SK-N-SH (cell line): ENCODE measurements at regions of chr17 and their contacts with region 1.

Region 1: DNA sequence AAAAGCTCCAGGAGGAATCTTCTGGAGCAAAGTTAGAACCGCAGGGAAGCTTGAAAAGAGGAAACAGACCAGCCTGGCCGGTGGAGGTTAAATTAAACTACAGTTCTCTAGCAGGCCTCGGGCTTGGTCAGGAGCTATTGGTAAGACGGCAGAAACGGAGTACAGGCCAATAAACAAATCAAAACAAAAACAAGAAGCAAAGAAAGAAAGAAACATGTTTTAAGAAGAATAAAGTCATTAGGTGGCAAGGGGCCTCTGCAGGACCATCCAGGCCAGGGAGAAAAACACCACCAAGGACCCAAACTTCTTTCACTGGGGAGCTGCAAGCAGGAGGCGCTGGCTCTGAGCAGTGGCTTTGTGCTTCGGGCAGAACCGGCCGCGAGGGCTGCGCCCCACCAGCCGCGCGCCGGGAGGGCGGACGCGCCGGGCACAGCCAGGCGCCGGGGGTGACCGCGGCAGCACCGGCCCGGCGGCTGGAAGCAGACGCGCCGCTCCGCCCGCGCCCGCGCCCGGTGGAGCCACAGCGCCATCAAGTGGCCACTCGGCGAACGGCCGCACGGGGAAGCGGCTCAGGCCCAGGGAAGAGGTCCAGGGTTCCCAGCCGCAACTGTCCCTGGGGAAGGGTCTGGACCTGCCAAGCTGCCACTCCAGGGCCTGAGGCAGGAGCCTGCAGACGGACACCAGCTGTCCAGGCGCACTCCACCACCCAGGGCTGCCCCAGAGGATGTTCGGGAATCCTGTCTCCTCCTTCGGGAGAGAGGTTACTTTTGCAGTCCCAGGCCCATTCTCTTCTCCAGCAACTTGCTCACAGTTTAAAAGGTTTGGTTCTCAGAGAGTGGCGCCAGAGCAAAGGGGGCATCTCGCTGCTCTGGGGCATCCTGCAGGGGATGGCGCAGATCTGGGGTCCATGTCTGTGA is 419.4 kb downstream of the SOX9 start:
- DNase-seq: peak; percentile 99
- H3K4me3 ChIP-seq: no peak overlapping the region
- H3K27ac ChIP-seq: peak overlapping the region; percentile 31 to 54
- H3K4me1 ChIP-seq: peaks cover 9 to 14% of the 10 kb centered on the region in 2 experiments
- H3K27me3 ChIP-seq: no peaks in the 10 kb centered on the region
- CTCF ChIP-seq: peak; percentile 82
- EP300 ChIP-seq: peak; percentile 14 to 16; a peak in 1 of 4 replicates
- RAD21 ChIP-seq: peak; percentile 93

Region 2: GRCh38 chr17:71084219-71084618 is 1456.0 kb before region 1 on chr17:
- CTCF ChIA-PET with region 1: interaction called, 16 read pairs
- POLR2A ChIA-PET with region 1: no interaction called
- DNase-seq: peak; percentile 28
- H3K4me3 ChIP-seq: no peak overlapping the region; a peak in 1 of 4 replicates
- H3K27ac ChIP-seq: no peak overlapping the region
- H3K4me1 ChIP-seq: no peaks in the 10 kb centered on the region
- H3K27me3 ChIP-seq: no peaks in the 10 kb centered on the region
- CTCF ChIP-seq: peak; percentile 67
- EP300 ChIP-seq: no peak
- RAD21 ChIP-seq: peak; percentile 79

Region 3: DNA sequence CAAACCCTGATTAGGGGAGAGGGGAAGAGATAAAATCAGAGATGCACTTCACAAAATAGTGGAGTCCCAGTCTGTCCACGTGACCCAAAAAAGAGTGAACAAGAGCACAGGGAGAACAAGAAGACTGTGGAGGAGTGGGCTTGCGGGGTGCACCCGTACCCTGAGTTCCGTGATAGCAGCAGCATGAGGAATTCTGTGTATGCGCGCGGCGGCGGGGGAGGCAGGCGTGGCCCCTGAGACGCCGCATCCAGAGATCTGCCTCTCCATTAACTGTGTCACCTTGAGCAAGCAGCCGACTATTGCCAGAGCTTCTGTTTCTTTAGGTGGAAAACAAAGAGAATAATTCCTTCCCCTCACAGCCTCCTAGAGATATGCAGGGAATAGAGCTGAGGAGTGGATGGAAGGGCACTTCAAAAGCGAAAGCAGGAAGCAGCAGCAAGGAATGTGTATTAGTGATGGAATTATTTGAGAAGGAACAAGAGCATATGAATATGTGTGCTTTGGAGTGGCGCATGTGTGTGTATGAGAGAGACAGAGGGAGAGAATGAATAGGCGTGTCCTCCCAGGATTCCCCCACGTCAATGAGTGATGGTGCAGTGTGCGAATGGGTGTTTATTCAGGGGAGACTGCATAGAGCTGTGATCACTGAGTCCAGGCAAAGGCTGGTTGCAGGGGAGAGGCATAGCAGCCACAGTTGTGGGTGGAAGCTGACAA is 429.9 kb before region 1 on chr17:
- CTCF ChIA-PET with region 1: interaction called, 69 read pairs
- POLR2A ChIA-PET with region 1: no interaction called
- DNase-seq: no peak
- H3K4me3 ChIP-seq: no peak overlapping the region
- H3K27ac ChIP-seq: no peak overlapping the region
- H3K4me1 ChIP-seq: peaks cover 0 to 20% of the 10 kb centered on the region in 2 experiments; a peak in 1 of 4 replicates
- H3K27me3 ChIP-seq: no peaks in the 10 kb centered on the region
- CTCF ChIP-seq: no peak
- EP300 ChIP-seq: no peak
- RAD21 ChIP-seq: no peak

Region 4: GRCh38 chr17:72381597-72382397 is 158.4 kb before region 1 on chr17:
- CTCF ChIA-PET with region 1: interaction called, 25 read pairs
- POLR2A ChIA-PET with region 1: interaction called, 6 read pairs
- DNase-seq: peak; percentile 54
- H3K4me3 ChIP-seq: no peak overlapping the region
- H3K27ac ChIP-seq: no peak overlapping the region
- H3K4me1 ChIP-seq: peaks cover 18 to 52% of the 10 kb centered on the region in 2 experiments
- H3K27me3 ChIP-seq: no peaks in the 10 kb centered on the region
- CTCF ChIP-seq: no peak
- EP300 ChIP-seq: no peak
- RAD21 ChIP-seq: no peak

Region 5: DNA sequence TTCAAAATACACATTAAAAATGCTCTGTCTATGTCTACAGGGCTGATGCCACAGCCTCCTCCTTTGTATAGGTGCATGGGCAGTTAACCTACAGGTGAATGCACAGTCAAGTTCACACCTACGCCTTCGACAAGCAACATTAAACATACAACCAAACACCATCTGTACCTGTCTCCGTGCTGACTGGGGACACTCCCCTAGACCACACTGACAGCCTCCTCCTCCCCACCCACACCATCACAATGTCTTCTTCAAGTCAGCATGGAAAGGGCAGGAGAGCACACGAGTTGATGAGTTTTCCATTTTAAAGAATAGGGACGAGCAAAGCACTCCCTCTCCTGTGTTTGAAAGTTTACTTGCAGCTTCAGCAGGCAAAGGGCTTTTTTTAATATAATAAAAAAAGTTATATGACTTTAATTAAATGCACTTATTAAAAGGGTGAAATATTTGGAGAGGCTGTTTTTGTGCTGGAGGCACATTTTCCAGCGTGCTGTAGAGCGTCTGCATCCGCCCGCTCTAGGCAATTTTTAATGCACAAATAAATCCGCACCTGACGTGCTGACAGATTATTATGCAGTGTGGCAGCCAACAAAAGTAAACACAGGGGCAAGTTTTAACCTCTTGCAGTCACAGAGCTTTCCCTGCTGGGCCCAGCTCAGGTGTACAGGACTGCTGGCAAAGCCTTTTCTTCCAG is 51.5 kb before region 1 on chr17:
- CTCF ChIA-PET with region 1: no interaction called
- POLR2A ChIA-PET with region 1: no interaction called
- DNase-seq: no peak
- H3K4me3 ChIP-seq: no peak overlapping the region
- H3K27ac ChIP-seq: no peak overlapping the region
- H3K4me1 ChIP-seq: no peaks in the 10 kb centered on the region; a peak in 1 of 4 replicates
- H3K27me3 ChIP-seq: no peaks in the 10 kb centered on the region
- CTCF ChIP-seq: no peak
- EP300 ChIP-seq: no peak
- RAD21 ChIP-seq: no peak

Region 6: GRCh38 chr17:72518753-72519597 is 21.3 kb before region 1 on chr17:
- CTCF ChIA-PET with region 1: interaction called, 22 read pairs
- POLR2A ChIA-PET with region 1: no interaction called
- DNase-seq: no peak
- H3K4me3 ChIP-seq: no peak overlapping the region
- H3K27ac ChIP-seq: no peak overlapping the region
- H3K4me1 ChIP-seq: peaks cover 9 to 22% of the 10 kb centered on the region in 2 experiments; a peak in 3 of 4 replicates
- H3K27me3 ChIP-seq: no peaks in the 10 kb centered on the region
- CTCF ChIP-seq: no peak
- EP300 ChIP-seq: no peak
- RAD21 ChIP-seq: no peak

Region 7: DNA sequence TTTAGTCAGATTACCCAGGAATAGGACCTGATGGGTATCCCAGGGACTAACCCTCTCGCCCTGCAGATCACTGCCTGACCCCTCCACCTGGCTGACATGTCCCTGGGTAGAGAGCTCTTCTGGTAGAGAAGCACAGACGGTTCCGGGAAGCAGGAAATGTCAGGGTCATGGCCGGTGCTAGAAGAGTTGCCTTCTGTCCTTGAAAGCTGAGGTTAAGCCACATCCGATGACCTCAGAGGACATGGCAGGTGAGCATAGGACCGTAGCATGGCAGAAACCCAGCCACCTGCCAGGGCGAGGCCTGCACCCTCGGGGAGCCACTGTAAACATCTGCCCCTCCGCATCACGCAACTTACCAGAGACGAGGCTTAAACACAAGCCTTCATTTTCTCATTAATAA is 64.3 kb after region 1 on chr17:
- CTCF ChIA-PET with region 1: no interaction called
- POLR2A ChIA-PET with region 1: no interaction called
- DNase-seq: no peak
- H3K4me3 ChIP-seq: no peak overlapping the region
- H3K27ac ChIP-seq: no peak overlapping the region
- H3K4me1 ChIP-seq: peaks cover 0 to 31% of the 10 kb centered on the region in 2 experiments; a peak in 1 of 4 replicates
- H3K27me3 ChIP-seq: no peaks in the 10 kb centered on the region
- CTCF ChIP-seq: no peak
- EP300 ChIP-seq: no peak
- RAD21 ChIP-seq: no peak